Esophagus muscularis mucosa (tissue), 4 donors: ENCODE measurements at regions of chr5 and their contacts with region 1.

Region 1: DNA sequence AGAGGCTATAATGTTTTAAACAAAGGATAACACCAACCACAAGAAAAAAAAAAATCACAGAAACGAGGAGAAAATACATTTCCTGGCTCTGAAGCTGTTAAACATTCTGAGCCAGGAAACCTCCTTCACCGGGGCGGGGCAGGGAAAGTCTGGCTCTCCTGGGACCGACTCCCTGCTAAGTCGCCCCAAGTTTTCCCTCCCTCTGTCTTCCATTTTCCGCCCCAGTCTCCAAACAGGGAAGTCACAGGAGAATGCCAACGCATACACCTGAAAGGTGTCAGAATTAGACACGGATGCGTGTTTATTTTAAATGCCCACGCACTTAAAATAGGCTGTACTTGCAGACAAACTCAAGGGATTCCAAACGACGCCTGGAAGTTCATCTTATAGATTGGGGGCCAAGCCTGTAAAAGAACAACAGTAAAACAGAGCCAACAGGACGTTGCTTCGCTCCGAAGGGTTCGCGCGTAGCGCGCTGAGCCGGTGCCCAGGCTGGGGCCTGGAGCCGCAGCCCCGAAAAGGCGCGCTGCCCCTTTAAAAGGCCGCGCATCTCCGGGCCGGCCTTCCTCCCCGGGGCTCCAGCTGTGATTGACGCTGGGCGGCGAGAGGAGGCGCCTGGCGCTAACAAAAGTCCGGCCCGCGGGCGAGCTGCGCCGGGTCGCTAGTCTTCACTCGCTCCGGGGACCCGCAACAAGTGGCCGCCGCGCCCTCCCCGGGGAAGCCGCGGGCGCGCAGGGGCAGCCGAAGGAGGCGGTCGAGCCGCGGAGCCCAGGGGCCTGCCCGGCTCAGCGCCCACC is at the start of gene FBXL7:
- DNase-seq: peak; percentile 74
- H3K4me3 ChIP-seq: peak within 1 kb of the TSS; percentile 72 to 93 (median 86)
- H3K27ac ChIP-seq: peak within 1 kb of the TSS; percentile 86 to 93 (median 90)
- H3K4me1 ChIP-seq: peaks cover 24 to 43% (median 36%) of the 10 kb centered on the region in 4 donors
- H3K27me3 ChIP-seq: no peaks in the 10 kb centered on the region
- CTCF ChIP-seq: peak; percentile 17 to 32 (median 26)
- EP300 ChIP-seq: no peak
- POLR2A ChIP-seq: peak; percentile 20
- total RNA-seq, gene FBXL7: 25.7 to 37.7 (median 27.6) TPM

Region 2: DNA sequence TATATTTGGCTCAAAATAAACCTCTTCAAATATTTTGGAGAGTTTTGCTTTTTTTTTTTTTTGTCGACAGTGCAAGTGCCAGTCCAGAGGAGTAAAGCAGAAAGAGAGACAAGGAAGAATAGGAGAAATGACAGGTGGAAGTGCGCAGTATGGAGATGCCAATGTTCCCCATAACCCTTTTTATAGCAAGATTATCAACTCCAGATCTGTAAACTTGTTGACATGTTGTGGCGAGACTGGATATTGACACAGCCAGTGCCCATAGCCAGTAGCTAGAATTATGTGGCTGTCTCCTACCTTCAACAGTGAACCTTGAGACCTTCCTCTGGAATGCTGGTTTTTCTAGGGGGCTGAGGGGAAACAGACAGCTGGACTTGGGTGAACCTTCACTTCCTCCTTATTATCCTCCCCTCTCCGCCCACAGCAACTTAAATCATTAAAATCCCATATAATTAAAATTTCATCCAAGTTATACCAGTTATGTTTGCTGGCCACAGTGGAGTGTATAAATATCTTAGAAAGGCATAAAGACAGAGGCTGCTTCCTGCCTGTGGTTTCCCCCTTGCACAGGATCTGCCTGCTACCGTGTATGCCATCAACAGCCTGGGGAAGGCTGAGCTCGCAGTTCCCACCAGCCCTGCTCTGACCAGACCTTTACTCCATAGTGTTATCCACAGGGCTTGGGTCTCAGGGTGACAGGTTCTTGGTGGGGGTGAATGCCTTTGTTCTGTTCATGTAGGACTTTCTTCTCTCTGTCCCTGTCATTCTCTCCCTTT is 515.9 kb before region 1 on chr5:
- intact Hi-C with region 1: no loop called
- DNase-seq: no peak
- H3K4me3 ChIP-seq: no peak overlapping the region
- H3K27ac ChIP-seq: no peak overlapping the region
- H3K4me1 ChIP-seq: no peaks in the 10 kb centered on the region
- H3K27me3 ChIP-seq: no peaks in the 10 kb centered on the region
- CTCF ChIP-seq: no peak
- EP300 ChIP-seq: no peak
- POLR2A ChIP-seq: no peak

Region 3: DNA sequence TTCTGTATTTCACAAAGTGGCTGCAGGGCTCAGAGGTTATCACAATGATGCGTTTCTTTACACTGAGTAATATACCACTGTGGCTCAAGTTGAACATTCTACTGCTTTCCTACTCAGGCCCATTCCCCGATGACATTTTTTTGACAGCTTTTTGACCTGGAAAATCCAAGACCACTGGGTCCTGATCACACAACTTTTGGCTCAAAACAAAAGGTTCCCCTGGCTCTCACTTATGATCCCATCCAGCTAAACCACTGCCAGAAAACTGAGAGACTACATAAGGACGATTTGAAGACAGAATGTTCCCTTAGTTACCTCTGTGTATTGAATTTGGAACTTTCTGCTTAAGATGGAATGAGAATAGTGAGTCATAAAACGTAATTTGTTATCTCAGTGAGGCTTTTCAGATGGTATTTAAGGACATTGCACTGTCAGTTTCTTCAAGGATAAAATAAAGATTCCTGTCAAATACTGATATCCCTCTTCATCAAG is 77.8 kb before region 1 on chr5:
- intact Hi-C with region 1: loop called (anchors 5 kb)
- DNase-seq: no peak
- H3K4me3 ChIP-seq: no peak overlapping the region
- H3K27ac ChIP-seq: peak overlapping the region; percentile 35 to 76 (median 70)
- H3K4me1 ChIP-seq: peaks cover 0 to 54% (median 37%) of the 10 kb centered on the region in 4 donors
- H3K27me3 ChIP-seq: no peaks in the 10 kb centered on the region
- CTCF ChIP-seq: no peak
- EP300 ChIP-seq: no peak
- POLR2A ChIP-seq: no peak

Region 4: DNA sequence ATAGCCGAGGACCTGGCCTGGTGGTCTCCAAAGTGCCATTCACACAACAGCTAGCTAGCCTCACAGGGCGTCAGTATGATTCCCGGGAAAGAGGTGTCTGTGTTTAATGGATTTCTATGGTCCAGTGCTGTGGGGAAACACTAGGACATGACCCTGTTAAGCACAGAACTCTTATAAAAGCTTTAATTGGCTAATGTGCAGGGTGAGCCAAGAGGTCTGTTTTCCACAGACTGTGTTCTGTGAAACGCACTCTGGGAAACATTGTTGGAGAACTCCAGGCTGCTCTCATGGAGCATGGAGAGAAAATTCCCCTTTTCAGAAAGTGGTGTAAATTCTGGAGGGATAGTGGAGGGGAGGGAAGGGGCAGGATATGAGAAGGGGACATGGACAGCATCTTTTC is 331.7 kb after region 1 on chr5:
- intact Hi-C with region 1: no loop called
- DNase-seq: no peak
- H3K4me3 ChIP-seq: no peak overlapping the region
- H3K27ac ChIP-seq: no peak overlapping the region
- H3K4me1 ChIP-seq: peaks cover 8 to 25% (median 15%) of the 10 kb centered on the region in 4 donors
- H3K27me3 ChIP-seq: no peaks in the 10 kb centered on the region
- CTCF ChIP-seq: no peak
- EP300 ChIP-seq: no peak
- POLR2A ChIP-seq: no peak

Region 5: DNA sequence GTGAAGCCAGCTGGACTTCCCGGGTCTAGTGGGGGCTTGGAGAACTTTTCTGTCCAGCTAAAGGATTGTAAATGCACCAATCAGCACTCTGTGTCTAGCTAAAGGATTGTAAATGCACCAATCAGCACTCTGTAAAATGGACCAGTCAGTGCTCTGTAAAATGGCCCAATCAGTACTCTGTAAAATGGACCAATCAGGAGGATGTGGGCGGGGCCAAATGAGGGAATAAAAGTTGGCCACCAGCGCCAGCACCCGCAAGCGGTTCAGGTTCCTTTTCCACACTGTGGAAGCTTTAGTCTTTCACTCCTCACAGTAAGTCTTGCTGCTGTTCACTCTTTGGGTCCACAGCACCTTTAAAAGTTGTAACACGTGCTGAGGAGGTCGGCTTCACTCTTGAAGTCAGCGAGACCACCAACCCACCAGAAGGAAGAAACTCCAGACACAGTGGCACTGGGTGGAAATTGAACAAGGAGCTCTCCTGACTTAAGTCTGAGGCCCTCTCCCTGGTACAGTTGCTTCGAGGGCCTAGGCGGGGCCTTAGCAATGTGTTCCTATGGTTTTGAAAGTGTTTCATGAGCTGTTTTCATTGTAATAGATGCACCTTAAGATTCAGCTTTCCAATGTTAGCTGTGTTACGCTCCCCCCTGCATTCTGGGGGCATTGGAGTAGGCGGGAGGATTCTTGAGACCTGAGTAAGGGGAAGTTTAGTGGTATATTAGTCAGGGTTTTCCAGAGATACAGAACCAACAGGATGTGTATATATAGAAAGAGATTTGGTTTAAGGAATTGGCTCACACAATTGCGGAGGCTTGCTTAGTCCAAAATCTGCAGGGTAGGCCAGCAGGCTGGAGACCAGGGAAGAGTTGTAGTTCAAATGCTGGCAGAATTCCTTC is 1457.8 kb after region 1 on chr5:
- intact Hi-C with region 1: no loop called
- DNase-seq: no peak
- H3K4me3 ChIP-seq: no peak overlapping the region
- H3K27ac ChIP-seq: no peak overlapping the region
- H3K4me1 ChIP-seq: no peaks in the 10 kb centered on the region
- H3K27me3 ChIP-seq: no peaks in the 10 kb centered on the region
- CTCF ChIP-seq: no peak
- EP300 ChIP-seq: no peak
- POLR2A ChIP-seq: no peak